ENCODE measurements at regions of chr12 and their contacts with region 1.

Region 1: DNA sequence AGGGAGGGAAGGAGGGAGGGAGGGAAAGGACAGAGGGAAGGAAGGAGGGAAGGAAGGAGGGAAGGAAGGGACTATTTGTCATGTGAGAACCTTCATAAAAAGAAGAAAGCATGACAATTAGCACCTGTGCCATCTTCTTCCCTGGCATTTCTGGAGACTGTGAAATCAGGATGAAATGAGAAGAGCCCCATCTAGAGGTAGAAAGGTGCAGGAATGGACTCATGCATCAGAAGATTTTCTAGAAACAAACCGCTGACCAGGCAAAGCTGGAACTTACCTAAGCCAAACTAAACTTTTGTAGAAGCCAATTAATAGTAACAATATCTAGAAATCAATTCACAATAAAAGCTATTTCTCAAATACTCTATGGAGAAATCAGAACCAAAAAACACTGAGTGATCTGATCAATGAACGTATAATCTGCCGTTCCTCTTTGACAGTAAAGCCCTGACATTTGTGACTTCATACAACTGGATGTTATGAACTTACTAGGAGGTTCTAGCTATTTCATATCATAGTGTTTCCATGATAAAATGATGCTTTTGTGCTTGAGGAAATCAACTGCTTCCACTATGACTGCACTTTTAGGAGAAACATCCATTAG is 24.4 kb upstream of the CRACR2A start:
- DNase-seq: peak; percentile 51
- CTCF ChIP-seq: peak; percentile 51

Region 2: DNA sequence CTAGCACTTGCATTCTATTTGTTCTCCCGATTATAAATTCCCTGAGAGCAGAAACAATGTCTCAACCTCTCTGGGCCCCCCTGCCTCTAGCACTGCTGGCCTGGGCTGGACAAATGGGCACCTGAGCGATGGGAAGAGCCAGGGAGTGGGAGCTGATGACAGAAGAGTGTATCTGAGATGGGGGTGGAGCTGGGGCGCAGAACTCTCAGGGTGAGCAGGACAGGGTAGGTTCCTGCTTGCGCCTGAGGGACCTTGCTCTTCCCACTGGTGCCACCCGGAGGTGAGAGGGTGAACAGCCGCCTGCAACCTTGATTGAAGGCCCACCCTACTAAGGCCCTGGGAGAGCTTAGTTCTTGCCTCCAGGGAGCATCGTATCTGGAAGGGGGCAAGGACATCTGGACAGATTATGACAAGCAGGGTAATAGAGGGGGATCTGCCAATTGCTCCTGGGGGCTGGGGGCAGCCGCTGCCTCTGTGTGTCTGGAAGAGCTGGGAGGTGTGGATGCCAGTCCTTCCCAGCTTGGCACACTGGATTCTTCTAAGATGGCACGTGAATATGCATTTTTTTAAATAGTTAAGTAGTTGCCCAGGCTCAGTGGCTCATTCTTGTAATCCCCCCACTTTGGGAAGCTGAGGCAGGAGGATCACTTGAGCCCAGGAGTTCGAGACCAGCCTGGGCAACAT is 743.1 kb before region 1 on chr12:
- in situ Hi-C with region 1: no loop called
- DNase-seq: peak; percentile 84
- CTCF ChIP-seq: peak; percentile 49

Region 3: GRCh38 chr12:3342056-3342455 is 435.3 kb before region 1 on chr12:
- in situ Hi-C with region 1: loop called (anchors 25 kb)
- DNase-seq: peak; percentile 50
- CTCF ChIP-seq: no peak

Measured in GM13976 (cell line).